ENCODE measurements at regions of chr12 and their contacts with region 1.

Region 1: DNA sequence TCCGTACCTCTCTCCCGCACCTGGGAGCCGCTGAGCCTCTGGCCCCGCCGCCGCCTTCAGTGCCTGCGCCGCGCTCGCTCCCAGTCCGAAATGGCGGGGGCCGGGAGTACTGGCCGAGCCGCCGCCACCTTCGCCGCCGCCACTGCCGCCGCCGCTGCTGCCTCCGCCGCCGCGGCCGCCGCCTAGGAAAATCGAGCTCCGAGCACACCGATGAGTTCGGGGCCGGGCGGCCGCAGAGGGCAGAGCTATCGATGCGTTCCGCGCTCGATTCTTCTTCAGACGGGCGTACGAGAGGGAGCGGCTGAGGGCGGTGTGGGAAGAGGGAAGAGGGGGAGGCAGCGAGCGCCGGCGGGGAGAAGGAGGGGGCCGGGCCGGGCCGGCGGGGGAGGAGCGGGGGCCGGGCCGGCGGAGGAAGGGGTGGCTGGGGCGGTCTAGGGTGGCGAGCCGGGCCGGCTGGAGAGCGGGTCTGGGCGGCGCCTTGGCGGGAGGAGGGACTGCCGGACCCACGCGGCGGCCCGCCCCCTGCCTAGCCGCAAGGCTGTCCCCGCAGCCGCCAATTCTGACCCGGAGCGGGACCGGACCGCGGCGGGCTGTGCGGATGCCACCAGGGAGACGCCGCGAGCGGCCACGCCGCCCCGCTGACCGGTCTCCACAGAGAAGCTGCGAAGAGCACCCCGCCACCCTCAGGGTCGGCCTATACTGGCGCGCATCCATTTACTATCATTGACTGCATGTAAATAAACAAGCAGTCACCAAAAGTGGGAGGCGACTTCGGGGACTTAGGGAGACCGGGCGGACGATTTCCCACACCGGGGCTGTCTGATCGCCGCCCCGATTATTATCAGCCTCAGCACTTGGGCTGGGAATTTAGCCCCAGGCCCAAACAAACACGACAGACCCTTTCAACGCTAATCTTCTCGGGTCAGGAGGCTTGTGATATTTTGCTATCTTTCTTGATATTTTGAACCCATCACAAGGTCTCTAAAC is at the start of gene KRAS:
- DNase-seq: peak; percentile 92
- H3K4me3 Mint-ChIP-seq: peak within 1 kb of the TSS; percentile 91
- H3K27ac Mint-ChIP-seq: peak within 1 kb of the TSS; percentile 82
- H3K4me1 Mint-ChIP-seq: peaks cover 30% of the 10 kb centered on the region
- H3K27me3 Mint-ChIP-seq: no peaks in the 10 kb centered on the region
- total RNA-seq, gene KRAS: 15.9 to 17.8 TPM

Region 2: GRCh38 chr12:25195056-25195971 is 55.7 kb before region 1 on chr12 and contains the starts of genes DNAI7 and ETFRF1:
- CTCF ChIA-PET with region 1: no interaction called
- POLR2A ChIA-PET with region 1: no interaction called
- intact Hi-C with region 1: loop called (anchors 1 kb)
- DNase-seq: peak; percentile 97
- H3K4me3 Mint-ChIP-seq: peak within 1 kb of the TSS; percentile 95
- H3K27ac Mint-ChIP-seq: peak within 1 kb of the TSS; percentile 92
- H3K4me1 Mint-ChIP-seq: peaks cover 21% of the 10 kb centered on the region
- H3K27me3 Mint-ChIP-seq: no peaks in the 10 kb centered on the region
- total RNA-seq, gene DNAI7: 0.10 TPM in 1 of 2 experiments, not detected in the other
- total RNA-seq, gene ETFRF1: 9.8 to 10.1 TPM

Region 3: DNA sequence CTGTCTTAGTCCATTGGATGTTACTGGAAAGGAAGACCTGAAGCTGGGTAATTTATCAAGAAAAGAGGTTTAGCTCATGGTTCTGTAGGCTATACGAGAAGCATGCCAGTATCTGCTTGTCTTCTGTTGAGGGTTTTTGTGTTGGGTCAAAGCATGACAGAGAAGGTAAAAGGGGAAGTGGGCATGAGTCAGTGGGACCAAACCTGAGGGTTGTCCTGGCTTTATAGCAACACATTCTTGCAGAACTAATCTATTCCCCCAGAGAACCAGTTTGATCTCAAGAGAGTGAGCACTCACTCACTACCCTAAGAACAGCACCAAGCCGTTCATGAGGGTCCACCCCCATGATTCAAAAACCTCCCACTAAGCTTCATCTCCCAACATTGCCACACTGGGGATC is 18.7 kb after region 1 on chr12:
- CTCF ChIA-PET with region 1: no interaction called
- POLR2A ChIA-PET with region 1: no interaction called
- intact Hi-C with region 1: loop called (anchors 2 kb)
- DNase-seq: no peak
- H3K4me3 Mint-ChIP-seq: no peak overlapping the region
- H3K27ac Mint-ChIP-seq: no peak overlapping the region
- H3K4me1 Mint-ChIP-seq: peaks cover 5% of the 10 kb centered on the region
- H3K27me3 Mint-ChIP-seq: no peaks in the 10 kb centered on the region

Measured in activated CD4-positive, alpha-beta memory T cell treated with anti-CD3 and anti-CD28 coated beads for 36 hours (primary cell).